IMR-90 (cell line): ENCODE measurements at regions of chr14 and their contacts with region 1.

Region 1: DNA sequence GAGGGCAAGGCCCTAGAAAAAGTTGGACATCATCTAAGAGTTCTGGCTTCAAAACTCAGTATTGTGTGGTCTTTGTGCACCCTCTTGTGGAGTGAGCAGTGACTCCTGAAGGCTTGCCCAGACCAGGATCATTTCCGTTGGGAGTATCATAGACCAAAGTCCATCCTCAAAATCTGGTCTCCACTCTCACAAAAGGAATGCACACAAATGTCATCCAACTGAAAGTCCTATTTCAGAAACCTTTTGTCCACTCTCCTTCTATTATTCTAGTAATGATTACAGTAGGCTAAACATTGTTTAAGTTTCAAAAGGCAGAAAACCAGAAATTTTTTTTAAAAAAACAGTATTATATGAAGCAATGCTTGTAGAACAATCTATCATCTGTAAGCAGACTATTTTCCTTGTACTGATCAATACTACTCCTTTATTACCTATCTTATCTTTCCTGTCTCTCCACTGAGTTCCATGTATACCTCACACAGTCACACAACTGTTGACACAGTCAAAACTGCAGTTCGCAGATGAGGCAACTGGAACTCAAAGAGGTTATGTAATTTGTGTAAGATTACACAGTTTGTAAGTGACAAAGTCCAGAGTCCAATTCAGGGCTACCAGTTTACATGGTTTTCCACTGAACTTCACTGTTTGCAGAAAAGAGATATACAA is 41.4 kb downstream of the COX16 start:
- DNase-seq: peak; percentile 61
- ATAC-seq: peak; percentile 91
- H3K4me3 ChIP-seq: no peak overlapping the region
- H3K27ac ChIP-seq: no peak overlapping the region
- H3K4me1 ChIP-seq: no peaks in the 10 kb centered on the region
- H3K27me3 ChIP-seq: peaks cover 2% of the 10 kb centered on the region; the same call in 1 of the 2 replicates
- CTCF ChIP-seq: peak; percentile 63
- POLR2A ChIP-seq: no peak
- RAD21 ChIP-seq: peak; percentile 73

Region 2: GRCh38 chr14:69818757-69819191 is 499.3 kb before region 1 on chr14:
- CTCF ChIA-PET with region 1: no interaction called
- POLR2A ChIA-PET with region 1: no interaction called
- dilution Hi-C with region 1: no loop called
- in situ Hi-C with region 1: no loop called
- intact Hi-C with region 1: loop called (anchors 5 kb)
- DNase-seq: peak; percentile 60
- ATAC-seq: peak; percentile 91
- H3K4me3 ChIP-seq: no peak overlapping the region
- H3K27ac ChIP-seq: no peak overlapping the region
- H3K4me1 ChIP-seq: no peaks in the 10 kb centered on the region
- H3K27me3 ChIP-seq: peaks cover 24% of the 10 kb centered on the region
- CTCF ChIP-seq: peak; percentile 93
- POLR2A ChIP-seq: peak; percentile 44; the same call in 1 of the 2 replicates
- RAD21 ChIP-seq: peak; percentile 98

Region 3: GRCh38 chr14:69845787-69846186 is 472.3 kb before region 1 on chr14:
- CTCF ChIA-PET with region 1: no interaction called
- POLR2A ChIA-PET with region 1: no interaction called
- dilution Hi-C with region 1: no loop called
- in situ Hi-C with region 1: loop called (anchors 25 kb)
- intact Hi-C with region 1: no loop called
- DNase-seq: peak; percentile 4
- ATAC-seq: no peak
- H3K4me3 ChIP-seq: no peak overlapping the region
- H3K27ac ChIP-seq: no peak overlapping the region
- H3K4me1 ChIP-seq: no peaks in the 10 kb centered on the region
- H3K27me3 ChIP-seq: peaks cover 52% of the 10 kb centered on the region
- CTCF ChIP-seq: no peak
- POLR2A ChIP-seq: no peak
- RAD21 ChIP-seq: no peak

Region 4: DNA sequence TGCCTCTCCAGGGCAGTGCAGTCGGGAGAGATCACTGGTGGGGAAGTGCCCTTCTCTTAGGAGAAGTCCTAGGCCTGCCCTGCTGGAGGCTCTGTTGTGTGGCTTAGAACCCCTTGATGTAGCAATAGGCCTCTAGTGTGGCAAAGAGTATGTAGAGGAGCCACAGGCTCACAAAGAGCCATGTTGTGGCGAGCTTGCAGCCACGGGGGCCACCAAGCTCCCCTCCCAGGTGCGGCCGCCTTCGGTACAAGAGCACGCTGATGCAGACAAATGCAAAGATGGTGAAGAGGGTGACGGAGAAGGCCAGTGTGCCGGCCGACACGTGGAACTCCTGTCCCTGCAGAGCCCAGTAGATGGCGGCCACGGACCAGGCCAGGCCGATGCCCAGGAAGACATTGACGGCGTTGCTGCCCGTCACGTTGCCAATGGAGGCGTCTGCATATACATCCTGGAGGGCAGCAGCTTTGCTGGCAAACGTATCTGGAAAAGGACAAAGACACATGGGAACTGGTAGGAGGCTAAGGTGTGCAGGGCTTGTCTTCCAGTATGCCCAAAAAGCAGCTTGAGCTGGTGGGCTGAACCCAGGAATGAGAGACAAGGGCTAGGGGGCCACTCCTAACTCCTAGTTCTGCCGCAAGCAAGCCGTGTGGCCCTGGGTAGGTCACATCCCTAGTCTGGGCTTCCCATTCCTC is 272.1 kb before region 1 on chr14:
- CTCF ChIA-PET with region 1: no interaction called
- POLR2A ChIA-PET with region 1: no interaction called
- dilution Hi-C with region 1: no loop called
- in situ Hi-C with region 1: no loop called
- intact Hi-C with region 1: loop called (anchors 1 kb)
- DNase-seq: peak; percentile 48
- ATAC-seq: peak; percentile 99
- H3K4me3 ChIP-seq: no peak overlapping the region
- H3K27ac ChIP-seq: no peak overlapping the region
- H3K4me1 ChIP-seq: no peaks in the 10 kb centered on the region
- H3K27me3 ChIP-seq: peaks cover 5% of the 10 kb centered on the region
- CTCF ChIP-seq: peak; percentile 62
- POLR2A ChIP-seq: no peak
- RAD21 ChIP-seq: peak; percentile 77

Region 5: DNA sequence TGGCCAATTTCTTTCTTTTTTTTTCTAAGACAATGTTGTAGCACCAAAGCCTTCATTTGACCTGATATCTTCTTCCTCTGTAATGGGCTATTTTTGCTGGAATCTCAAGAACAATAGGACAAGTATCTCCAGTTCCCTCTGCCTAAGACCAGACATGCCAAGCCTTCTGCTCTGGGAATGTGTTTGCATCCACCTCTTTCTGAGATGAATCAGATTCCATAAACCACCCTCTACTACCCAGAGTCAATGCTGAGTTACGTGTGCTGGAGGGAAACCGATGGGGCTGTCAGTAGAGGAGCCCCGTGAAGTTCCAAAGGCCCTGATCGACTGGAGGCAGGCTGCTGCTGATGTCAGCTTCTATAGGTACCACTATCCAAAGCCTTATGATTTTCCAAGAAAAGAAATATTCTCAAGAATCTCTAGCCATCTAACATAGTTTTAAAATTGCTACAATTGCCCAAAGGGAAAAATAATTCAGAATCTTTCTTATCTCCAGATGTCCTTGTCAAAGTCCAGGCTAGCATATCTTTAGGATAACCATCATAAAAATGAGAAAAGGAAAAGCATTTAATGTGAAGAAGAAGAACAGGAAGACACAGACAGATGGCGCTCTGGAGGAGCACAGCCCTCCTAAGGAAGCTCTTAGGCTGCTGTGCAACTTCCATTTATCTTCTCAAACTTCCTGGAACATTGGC is 231.3 kb before region 1 on chr14:
- CTCF ChIA-PET with region 1: interaction called, 5 read pairs
- POLR2A ChIA-PET with region 1: no interaction called
- dilution Hi-C with region 1: no loop called
- in situ Hi-C with region 1: loop called (anchors 10 kb)
- intact Hi-C with region 1: loop called (anchors 1 kb)
- DNase-seq: peak; percentile 54
- ATAC-seq: peak; percentile 60
- H3K4me3 ChIP-seq: no peak overlapping the region
- H3K27ac ChIP-seq: no peak overlapping the region
- H3K4me1 ChIP-seq: no peaks in the 10 kb centered on the region
- H3K27me3 ChIP-seq: no peaks in the 10 kb centered on the region
- CTCF ChIP-seq: peak; percentile 61
- POLR2A ChIP-seq: no peak
- RAD21 ChIP-seq: peak; percentile 57

Region 6: GRCh38 chr14:70096866-70097265 is 221.2 kb before region 1 on chr14:
- CTCF ChIA-PET with region 1: no interaction called
- POLR2A ChIA-PET with region 1: no interaction called
- dilution Hi-C with region 1: no loop called
- in situ Hi-C with region 1: loop called (anchors 10 kb)
- intact Hi-C with region 1: no loop called
- DNase-seq: peak; percentile 14
- ATAC-seq: peak; percentile 80
- H3K4me3 ChIP-seq: no peak overlapping the region
- H3K27ac ChIP-seq: no peak overlapping the region
- H3K4me1 ChIP-seq: no peaks in the 10 kb centered on the region
- H3K27me3 ChIP-seq: peaks cover 7% of the 10 kb centered on the region
- CTCF ChIP-seq: peak; percentile 20; the same call in 1 of the 2 replicates
- POLR2A ChIP-seq: no peak
- RAD21 ChIP-seq: no peak

Region 7: GRCh38 chr14:70350078-70350477 is 32.0 kb after region 1 on chr14:
- CTCF ChIA-PET with region 1: no interaction called
- POLR2A ChIA-PET with region 1: no interaction called
- dilution Hi-C with region 1: no loop called
- in situ Hi-C with region 1: no loop called
- intact Hi-C with region 1: no loop called
- DNase-seq: no peak
- ATAC-seq: no peak
- H3K4me3 ChIP-seq: no peak overlapping the region
- H3K27ac ChIP-seq: no peak overlapping the region
- H3K4me1 ChIP-seq: no peaks in the 10 kb centered on the region
- H3K27me3 ChIP-seq: no peaks in the 10 kb centered on the region
- CTCF ChIP-seq: no peak
- POLR2A ChIP-seq: no peak
- RAD21 ChIP-seq: no peak